ENCODE measurements at regions of chr15 and their contacts with region 1.

Region 1: DNA sequence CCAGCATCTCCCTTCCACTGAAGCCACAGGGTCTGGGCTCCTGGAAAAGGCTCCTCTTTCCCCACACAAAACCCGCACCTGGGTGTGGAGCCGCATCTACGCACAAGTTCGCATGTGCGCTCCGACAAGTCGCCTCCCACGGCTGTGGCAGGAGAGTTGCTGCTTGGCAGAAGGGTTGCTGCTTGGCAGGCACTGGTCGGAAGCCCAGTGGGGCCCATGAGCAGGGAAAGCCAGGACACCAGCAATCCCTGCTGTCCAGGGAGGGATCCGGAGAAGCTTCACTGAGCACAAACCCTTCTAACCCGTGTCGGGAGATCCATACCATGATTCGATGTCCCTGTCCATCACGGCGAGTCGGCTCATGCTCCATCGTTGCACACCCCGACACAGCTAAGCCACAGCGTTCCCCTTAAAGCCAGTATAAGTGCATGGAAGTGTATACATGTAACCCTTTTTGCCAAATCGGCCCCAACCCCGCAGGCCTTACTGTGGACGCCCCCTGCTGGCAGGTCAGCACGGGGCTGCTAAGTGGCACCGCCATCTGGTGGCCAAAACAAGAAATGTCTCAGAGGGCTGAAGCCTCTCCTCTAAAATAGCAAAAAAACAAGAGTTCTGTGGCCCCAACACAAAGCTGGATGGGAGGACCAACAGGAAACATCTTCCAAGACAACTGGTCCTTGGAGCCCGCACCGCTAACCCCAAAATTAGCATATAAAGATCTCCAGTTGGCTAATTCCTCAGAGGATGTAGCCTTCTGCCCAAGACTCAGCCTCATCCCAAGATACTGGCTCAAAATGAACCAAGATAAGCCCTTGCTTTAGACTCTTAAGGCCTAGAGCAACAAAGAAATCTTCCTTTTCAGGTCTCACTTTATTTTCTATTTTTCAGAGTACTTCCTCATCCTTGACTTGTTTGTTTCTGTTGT is 8.3 kb downstream of the ANKRD63 start:
- DNase-seq: peak; percentile 90
- H3K4me3 ChIP-seq: no peak overlapping the region
- H3K27ac ChIP-seq: no peak overlapping the region
- H3K4me1 ChIP-seq: peaks cover 0 to 5% (median 3%) of the 10 kb centered on the region in 4 donors
- H3K27me3 ChIP-seq: peaks cover 1 to 23% (median 10%) of the 10 kb centered on the region in 3 donors
- CTCF ChIP-seq: peak; percentile 100
- EP300 ChIP-seq: no peak
- POLR2A ChIP-seq: no peak

Region 2: DNA sequence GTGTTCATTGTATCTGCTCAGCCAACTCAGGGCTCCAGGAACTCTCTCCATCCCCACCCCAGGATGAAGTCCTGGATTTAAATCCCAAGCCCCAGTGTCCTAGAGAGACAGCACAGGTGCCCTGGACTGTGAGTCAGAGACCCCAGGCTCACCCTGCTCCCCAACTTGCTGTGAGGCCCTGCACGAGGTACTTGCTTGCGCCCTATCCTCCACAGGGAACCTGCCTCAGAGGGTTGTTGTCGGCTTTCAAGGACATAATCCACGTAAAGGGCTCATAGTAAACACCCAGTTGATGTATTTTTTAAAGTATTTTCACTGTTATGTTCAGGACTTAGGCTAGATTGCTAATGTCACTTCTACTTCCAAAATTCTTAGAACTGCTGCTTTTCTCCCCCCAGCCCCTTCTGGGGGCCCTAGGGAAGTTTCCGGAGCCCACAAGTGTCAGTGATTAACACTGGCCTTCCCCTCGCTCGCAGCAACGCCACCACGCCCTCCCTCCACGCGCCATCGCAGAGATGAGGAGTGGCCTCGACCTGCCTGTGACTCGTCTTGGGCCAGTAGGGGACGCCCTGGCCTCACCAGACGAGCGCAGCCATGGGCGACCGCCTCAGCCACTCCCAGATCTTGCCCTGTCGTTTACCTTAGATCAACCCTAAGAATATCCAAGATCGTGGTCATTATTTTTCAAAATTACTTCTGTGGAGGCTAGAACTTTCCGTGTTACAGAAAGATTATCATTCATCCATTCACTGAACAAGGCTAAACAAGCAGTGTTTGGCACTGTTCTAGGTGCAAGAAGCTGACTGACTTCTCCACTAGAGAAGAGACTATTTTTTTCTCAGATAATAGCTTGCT is 229.7 kb before region 1 on chr15:
- intact Hi-C with region 1: loop called (anchors 1 kb)
- DNase-seq: peak; percentile 93
- H3K4me3 ChIP-seq: peak overlapping the region in 1 of 4 donors; percentile 18
- H3K27ac ChIP-seq: peak overlapping the region; percentile 31 to 65 (median 47)
- H3K4me1 ChIP-seq: peaks cover 0 to 55% (median 40%) of the 10 kb centered on the region in 4 donors
- H3K27me3 ChIP-seq: no peaks in the 10 kb centered on the region
- CTCF ChIP-seq: peak; percentile 90 to 93 (median 92)
- EP300 ChIP-seq: no peak
- POLR2A ChIP-seq: no peak

Region 3: GRCh38 chr15:40217159-40217824 is 57.3 kb before region 1 on chr15:
- intact Hi-C with region 1: loop called (anchors 1 kb)
- DNase-seq: no peak
- H3K4me3 ChIP-seq: no peak overlapping the region
- H3K27ac ChIP-seq: no peak overlapping the region
- H3K4me1 ChIP-seq: no peaks in the 10 kb centered on the region
- H3K27me3 ChIP-seq: no peaks in the 10 kb centered on the region
- CTCF ChIP-seq: peak; percentile 78 to 84 (median 82)
- EP300 ChIP-seq: no peak
- POLR2A ChIP-seq: no peak

Region 4: DNA sequence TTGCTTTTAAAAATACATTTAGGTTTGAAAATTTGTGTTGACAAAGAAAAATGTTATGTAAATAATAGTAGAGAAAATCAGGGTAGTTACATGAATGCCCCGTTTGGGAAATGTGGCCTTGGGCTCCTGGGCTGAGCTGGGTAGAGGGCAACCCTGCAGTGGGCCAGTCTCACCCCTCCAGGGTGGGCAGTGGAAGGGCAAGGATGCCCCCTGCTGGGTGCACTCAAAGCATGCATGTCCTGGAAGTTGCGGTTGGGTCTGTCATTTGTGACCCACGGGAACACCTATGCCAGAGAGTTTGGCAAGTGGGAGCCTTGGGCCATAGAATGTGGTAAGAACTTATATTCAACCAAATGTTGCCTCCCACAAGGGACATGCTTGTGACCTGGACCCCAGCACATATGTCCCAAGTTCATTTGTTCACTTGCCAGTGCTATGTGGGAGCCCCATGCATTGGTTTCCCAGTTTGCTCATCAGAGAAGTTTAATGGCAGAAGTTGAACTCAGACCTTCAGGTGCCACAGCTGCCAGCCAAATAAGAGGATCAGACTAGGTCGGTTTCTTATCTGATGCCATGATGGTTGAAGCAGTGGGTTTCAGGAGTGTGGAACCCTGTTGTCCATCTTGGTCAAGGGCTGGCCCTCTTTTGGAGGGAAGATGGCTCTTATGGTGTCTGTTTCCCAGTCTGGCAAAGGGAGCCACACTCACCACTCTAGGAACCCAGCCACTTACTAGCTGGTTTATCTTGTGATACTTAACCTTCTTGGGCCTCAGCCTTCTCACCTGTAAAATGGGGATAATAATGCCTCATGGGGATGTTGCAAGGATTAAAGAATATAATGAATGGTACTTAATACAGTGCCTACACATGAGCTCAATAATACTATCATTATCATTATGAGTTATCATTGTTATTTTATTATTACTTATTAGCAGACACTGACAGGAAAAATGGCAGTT is 35.7 kb after region 1 on chr15:
- intact Hi-C with region 1: loop called (anchors 1 kb)
- DNase-seq: peak; percentile 72
- H3K4me3 ChIP-seq: no peak overlapping the region
- H3K27ac ChIP-seq: no peak overlapping the region
- H3K4me1 ChIP-seq: peaks cover 0 to 12% (median 4%) of the 10 kb centered on the region in 4 donors
- H3K27me3 ChIP-seq: no peaks in the 10 kb centered on the region
- CTCF ChIP-seq: peak; percentile 68 to 75 (median 72)
- EP300 ChIP-seq: no peak
- POLR2A ChIP-seq: no peak

Region 5: GRCh38 chr15:40367686-40368611 is 93.3 kb after region 1 on chr15:
- intact Hi-C with region 1: no loop called
- DNase-seq: peak; percentile 92
- H3K4me3 ChIP-seq: peak overlapping the region in 3 of 4 donors; percentile 34 to 48 (median 41)
- H3K27ac ChIP-seq: peak overlapping the region; percentile 25 to 82 (median 74)
- H3K4me1 ChIP-seq: peaks cover 0 to 23% (median 21%) of the 10 kb centered on the region in 4 donors
- H3K27me3 ChIP-seq: no peaks in the 10 kb centered on the region
- CTCF ChIP-seq: peak; percentile 70 to 80 (median 76)
- EP300 ChIP-seq: no peak
- POLR2A ChIP-seq: no peak

Region 6: GRCh38 chr15:40421246-40422157 is 146.9 kb after region 1 on chr15:
- intact Hi-C with region 1: loop called (anchors 1 kb)
- DNase-seq: peak; percentile 85
- H3K4me3 ChIP-seq: no peak overlapping the region
- H3K27ac ChIP-seq: no peak overlapping the region
- H3K4me1 ChIP-seq: peaks cover 0 to 17% (median 10%) of the 10 kb centered on the region in 4 donors
- H3K27me3 ChIP-seq: no peaks in the 10 kb centered on the region
- CTCF ChIP-seq: peak; percentile 91 to 94 (median 92)
- EP300 ChIP-seq: no peak
- POLR2A ChIP-seq: no peak

Measured in sigmoid colon (tissue), 7 donors.